Breast epithelium (tissue), 4 donors: ENCODE measurements at regions of chr16 and their contacts with region 1.

Region 1: GRCh38 chr16:89623511-89624261 is 10.2 kb downstream of the DPEP1 start:
- DNase-seq: no peak
- H3K4me3 ChIP-seq: no peak overlapping the region
- H3K27ac ChIP-seq: no peak overlapping the region
- H3K4me1 ChIP-seq: no peaks in the 10 kb centered on the region
- H3K27me3 ChIP-seq: peaks cover 0 to 4% of the 10 kb centered on the region in 2 donors
- CTCF ChIP-seq: no peak
- POLR2A ChIP-seq: no peak

Region 2: DNA sequence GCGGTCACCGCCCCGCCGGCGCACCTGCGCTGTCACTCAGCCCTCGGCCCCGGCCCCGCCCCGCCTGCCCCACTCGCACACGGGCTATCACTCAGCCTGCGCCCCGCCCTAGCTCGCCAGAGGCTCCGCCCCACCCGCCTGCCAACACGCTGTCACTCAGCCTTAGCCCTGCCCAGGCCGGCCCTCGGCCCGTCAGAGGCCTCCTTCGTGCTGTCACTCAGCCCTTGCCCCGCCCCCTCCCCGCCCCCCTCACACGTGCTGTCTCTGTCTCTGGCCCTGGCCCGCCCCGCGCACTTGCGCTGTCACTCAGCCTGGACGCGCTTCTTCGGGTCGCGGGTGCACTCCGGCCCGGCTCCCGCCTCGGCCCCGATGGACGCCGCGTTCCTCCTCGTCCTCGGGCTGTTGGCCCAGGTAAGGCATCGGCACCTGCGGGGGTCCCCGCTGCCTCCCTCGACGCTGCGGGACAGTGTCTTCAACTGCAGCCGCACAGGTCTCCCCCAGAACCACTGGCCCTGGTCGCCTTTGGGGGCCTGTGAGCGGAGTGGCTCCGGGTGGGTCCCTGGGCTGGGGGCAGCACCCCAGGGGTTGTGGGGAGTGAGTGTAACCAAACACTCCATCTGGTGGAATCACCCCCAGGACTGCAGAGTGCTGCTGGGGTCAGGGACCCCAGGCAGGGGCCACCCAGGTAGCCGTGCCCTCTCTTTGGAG is 452.1 kb before region 1 on chr16 and contains the start of gene CDH15:
- intact Hi-C with region 1: loop called (anchors 10 kb)
- DNase-seq: peak; percentile 94
- H3K4me3 ChIP-seq: peak within 1 kb of the TSS in 2 of 3 donors; percentile 44 to 64
- H3K27ac ChIP-seq: no peak within 1 kb of the TSS
- H3K4me1 ChIP-seq: peaks cover 0 to 21% of the 10 kb centered on the region in 2 donors
- H3K27me3 ChIP-seq: peaks cover 4 to 38% of the 10 kb centered on the region in 2 donors
- CTCF ChIP-seq: no peak
- POLR2A ChIP-seq: no peak
- total RNA-seq, gene CDH15: not detected

Region 3: DNA sequence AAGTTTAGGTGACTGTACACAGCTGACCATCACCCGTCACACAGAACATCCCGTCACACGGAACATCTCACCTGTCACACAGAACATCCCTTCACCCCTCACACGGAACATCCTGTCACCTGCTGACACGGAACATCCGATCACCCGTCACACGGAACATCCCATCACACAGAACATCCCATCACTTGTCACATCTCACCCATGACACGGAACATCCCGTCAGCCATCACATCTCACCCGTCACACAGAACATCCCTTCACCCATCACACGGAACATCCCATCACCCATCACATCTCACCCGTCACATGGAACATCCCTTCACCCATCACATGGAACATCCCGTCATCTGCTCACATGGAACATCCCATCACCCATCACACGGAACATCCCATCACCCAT is 44.3 kb before region 1 on chr16:
- intact Hi-C with region 1: loop called (anchors 1 kb)
- DNase-seq: no peak
- H3K4me3 ChIP-seq: no peak overlapping the region
- H3K27ac ChIP-seq: no peak overlapping the region
- H3K4me1 ChIP-seq: peaks cover 8 to 11% of the 10 kb centered on the region in 2 donors
- H3K27me3 ChIP-seq: peaks cover 13 to 21% of the 10 kb centered on the region in 2 donors
- CTCF ChIP-seq: no peak
- POLR2A ChIP-seq: no peak